Activated T-helper 2 cell treated with anti-CD3 and anti-CD28 coated beads, Interferon-gamma antibody, Interleukin-2, Interleukin-4, amounts not matched to agents 10 μg/mL and 5 μg/mL and 100 μg/mL, durations not matched to agents 14 hours and 24 hours and 36 hours (primary cell): ENCODE measurements at regions of chr6 and their contacts with region 1.

Region 1: DNA sequence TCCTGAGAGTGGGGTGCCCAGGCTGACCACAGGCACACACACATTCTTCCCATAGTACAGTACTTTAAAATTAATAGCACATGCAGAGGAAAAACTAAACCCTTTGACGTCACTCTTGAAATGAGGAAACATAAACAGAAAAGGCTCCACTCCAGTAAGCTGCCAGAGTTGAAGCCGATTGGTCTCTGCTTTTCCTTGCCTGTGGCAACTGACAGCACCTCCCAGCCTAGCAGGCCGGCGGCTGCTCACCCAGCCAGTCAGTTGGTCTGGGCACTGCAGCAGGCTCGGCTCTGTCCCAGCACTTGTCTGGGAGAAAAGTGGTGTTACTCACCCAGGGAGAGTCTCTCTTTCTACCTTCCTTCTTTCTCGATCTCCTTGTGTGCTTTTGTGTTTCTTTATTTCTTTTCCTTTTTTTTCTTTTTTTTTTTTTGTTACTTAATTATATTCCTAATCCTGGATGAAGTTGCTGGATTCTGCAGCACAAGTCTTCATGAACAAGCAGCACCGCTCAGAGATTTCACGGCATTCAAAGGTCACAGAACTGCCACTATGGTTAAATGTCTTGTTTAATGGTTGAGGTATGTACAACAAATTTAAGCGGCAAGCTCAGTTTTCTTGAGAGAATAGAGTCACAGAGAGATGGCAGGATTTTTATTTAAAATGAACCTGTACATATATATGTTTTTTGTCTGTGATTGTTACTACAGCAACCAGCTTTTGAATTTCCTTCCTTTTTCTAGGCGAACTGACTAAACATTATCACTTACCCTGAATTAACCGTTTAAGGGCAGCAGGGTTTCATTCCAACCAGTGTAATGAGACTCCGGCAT is at the start of gene PDE7B:
- DNase-seq: peak; percentile 68
- H3K4me3 Mint-ChIP-seq: peak within 1 kb of the TSS; percentile 94
- H3K27ac Mint-ChIP-seq: peak within 1 kb of the TSS; percentile 89
- H3K4me1 Mint-ChIP-seq: peaks cover 39% of the 10 kb centered on the region
- H3K27me3 Mint-ChIP-seq: no peaks in the 10 kb centered on the region
- total RNA-seq, gene PDE7B: 27.6 and 28.8 TPM in 2 replicates

Region 2: DNA sequence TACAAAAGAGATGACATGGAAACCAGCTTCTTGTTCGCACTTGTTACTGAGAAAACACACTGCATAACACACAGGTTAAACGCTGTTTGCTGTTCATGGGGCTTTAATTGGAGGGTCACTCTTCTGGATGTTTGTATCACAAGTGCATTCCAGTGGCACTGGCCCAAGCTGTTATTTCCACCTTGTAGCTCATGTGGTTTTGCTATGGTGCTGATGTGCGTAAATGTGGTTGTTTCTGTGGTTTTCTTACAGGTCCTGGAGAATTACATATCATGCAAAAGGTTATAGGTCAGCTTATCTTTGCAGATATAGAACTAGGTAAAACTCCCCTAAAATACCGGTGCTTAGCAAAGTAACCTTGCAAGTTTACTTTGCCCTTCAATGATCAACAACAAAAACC is 264.8 kb before region 1 on chr6:
- intact Hi-C with region 1: loop called (anchors 5 kb)
- DNase-seq: peak; percentile 55
- H3K4me3 Mint-ChIP-seq: no peak overlapping the region
- H3K27ac Mint-ChIP-seq: peak overlapping the region; percentile 95
- H3K4me1 Mint-ChIP-seq: peaks cover 75% of the 10 kb centered on the region
- H3K27me3 Mint-ChIP-seq: no peaks in the 10 kb centered on the region

Region 3: DNA sequence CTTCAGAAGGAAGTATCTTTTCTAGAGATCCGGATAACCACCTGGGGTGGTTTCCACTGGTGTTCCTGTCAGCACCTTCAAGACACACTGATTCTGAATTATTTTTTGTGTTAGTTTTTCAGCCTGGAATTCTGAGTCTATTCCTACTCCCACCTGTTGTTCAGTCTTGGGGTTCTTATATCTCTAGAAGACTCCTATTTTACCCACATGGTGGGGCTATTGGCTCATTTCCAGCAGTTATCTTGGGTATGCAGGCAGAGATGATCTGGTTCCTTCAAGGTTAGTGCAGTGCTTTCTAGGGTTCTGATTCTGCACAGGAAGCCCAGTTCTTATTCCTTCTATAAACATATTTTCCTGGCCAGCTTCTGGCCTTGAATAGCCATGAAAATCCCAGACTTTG is 175.8 kb before region 1 on chr6:
- intact Hi-C with region 1: loop called (anchors 2 kb)
- DNase-seq: peak; percentile 17
- H3K4me3 Mint-ChIP-seq: no peak overlapping the region
- H3K27ac Mint-ChIP-seq: peak overlapping the region; percentile 75
- H3K4me1 Mint-ChIP-seq: peaks cover 41% of the 10 kb centered on the region
- H3K27me3 Mint-ChIP-seq: no peaks in the 10 kb centered on the region

Region 4: DNA sequence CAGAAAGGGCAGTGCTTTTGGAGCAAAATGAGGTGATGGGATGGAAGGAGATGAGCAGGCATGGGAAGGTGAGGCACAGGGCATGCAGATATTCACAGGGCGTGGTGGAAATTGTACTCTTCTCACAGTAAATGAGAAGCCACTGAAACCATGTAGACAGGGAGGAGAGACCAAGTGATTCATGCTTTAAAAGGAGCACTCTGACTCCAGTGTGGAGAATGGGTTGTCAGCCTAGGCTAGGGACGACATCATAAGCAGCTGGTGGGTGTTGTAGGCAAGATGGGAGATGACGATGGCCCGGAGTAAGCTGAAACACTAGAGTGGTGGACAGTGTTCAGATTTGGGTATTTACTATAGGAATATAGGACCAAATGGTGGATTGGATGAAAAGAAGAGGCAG is 18.2 kb after region 1 on chr6:
- intact Hi-C with region 1: loop called (anchors 2 kb)
- DNase-seq: no peak
- H3K4me3 Mint-ChIP-seq: no peak overlapping the region
- H3K27ac Mint-ChIP-seq: peak overlapping the region; percentile 62
- H3K4me1 Mint-ChIP-seq: peaks cover 48% of the 10 kb centered on the region
- H3K27me3 Mint-ChIP-seq: no peaks in the 10 kb centered on the region

Region 5: DNA sequence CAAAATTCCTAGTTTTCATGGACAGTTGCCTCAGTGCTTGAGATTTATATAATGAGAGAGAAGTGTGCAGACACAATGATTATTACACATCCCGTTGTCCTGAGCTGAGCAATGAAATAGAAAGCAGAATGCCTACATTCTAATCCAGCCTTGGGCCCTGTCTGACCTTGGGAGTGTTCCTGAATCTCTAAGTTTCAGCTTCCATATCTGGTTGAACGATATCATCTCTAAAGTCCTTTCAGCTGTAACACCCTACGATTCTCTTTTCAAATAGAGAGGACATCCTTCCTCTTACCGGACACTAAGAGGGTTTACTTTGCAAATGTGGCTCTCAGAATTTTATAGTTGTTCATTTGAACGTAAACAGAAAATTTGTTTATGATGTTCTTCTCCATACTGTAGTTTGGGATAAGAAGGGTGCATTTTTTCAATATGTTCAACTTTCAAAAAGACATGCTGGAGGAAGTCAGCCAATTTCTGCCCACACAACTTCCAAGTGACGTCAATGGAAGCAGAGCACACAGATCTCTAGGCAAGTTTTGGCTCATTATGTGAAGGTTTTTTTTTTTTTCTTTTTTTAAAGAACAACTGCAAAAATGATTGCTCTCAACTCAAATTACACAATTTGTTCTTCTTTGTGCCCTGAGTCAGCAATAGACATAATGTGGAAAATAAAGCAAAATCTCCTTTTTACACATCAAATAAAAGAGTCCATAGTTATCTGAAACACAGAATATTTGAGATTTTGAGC is 50.3 kb after region 1 on chr6:
- intact Hi-C with region 1: loop called (anchors 2 kb)
- DNase-seq: no peak
- H3K4me3 Mint-ChIP-seq: peak overlapping the region; percentile 52
- H3K27ac Mint-ChIP-seq: peak overlapping the region; percentile 86
- H3K4me1 Mint-ChIP-seq: peaks cover 47% of the 10 kb centered on the region
- H3K27me3 Mint-ChIP-seq: no peaks in the 10 kb centered on the region